ENCODE measurements at regions of chr7 and their contacts with region 1.

Region 1: GRCh38 chr7:93955304-93955703 is 33.8 kb downstream of the GNG11 start:
- DNase-seq: no peak
- H3K4me3 ChIP-seq: no peak overlapping the region
- H3K27ac ChIP-seq: no peak overlapping the region
- H3K4me1 ChIP-seq: peaks cover 6% of the 10 kb centered on the region
- H3K27me3 ChIP-seq: no peaks in the 10 kb centered on the region
- CTCF ChIP-seq: no peak

Region 2: GRCh38 chr7:93861325-93861949 is 93.9 kb before region 1 on chr7:
- CTCF ChIA-PET with region 1: no interaction called
- POLR2A ChIA-PET with region 1: no interaction called
- intact Hi-C with region 1: no loop called
- DNase-seq: no peak
- H3K4me3 ChIP-seq: no peak overlapping the region
- H3K27ac ChIP-seq: no peak overlapping the region
- H3K4me1 ChIP-seq: peaks cover under 1% of the 10 kb centered on the region
- H3K27me3 ChIP-seq: no peaks in the 10 kb centered on the region
- CTCF ChIP-seq: peak; percentile 50; the same call in 1 of the 2 replicates

Region 3: DNA sequence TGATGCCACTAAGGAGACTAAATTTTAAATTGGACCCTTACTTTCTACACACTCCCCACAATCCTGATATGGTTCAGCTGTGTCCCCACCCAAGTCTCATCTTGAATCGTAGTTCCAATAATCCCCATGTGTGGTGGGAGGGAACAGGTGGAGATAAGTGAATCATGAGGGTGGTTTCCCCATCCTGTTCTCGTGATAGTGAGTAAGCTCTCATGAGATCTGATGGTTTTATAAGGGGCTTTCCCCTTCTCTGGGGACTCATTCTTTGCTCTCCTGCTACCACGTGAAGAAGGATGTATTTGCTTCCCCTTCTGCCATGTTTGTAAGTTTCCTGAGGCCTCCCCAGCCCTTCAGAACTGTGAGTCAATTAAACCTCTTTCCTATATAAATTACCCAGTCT is 67.2 kb after region 1 on chr7:
- CTCF ChIA-PET with region 1: no interaction called
- POLR2A ChIA-PET with region 1: no interaction called
- intact Hi-C with region 1: loop called (anchors 2 kb)
- DNase-seq: no peak
- H3K4me3 ChIP-seq: no peak overlapping the region
- H3K27ac ChIP-seq: no peak overlapping the region
- H3K4me1 ChIP-seq: no peaks in the 10 kb centered on the region
- H3K27me3 ChIP-seq: no peaks in the 10 kb centered on the region
- CTCF ChIP-seq: no peak

Measured in A673 (cell line).